T-cell (primary cell): ENCODE measurements at regions of chr9 and their contacts with region 1.

Region 1: GRCh38 chr9:4559261-4560182 is 69.3 kb downstream of the SLC1A1 start:
- DNase-seq: no peak
- ATAC-seq: no peak
- H3K4me3 ChIP-seq: no peak overlapping the region
- H3K4me3 Mint-ChIP-seq: no peak overlapping the region
- H3K27ac ChIP-seq: no peak overlapping the region
- H3K27ac Mint-ChIP-seq: no peak overlapping the region
- H3K4me1 ChIP-seq: peaks cover 11 to 21% of the 10 kb centered on the region in 2 experiments
- H3K4me1 Mint-ChIP-seq: peaks cover 29 to 33% (median 29%) of the 10 kb centered on the region in 3 donors
- H3K27me3 ChIP-seq: no peaks in the 10 kb centered on the region
- H3K27me3 Mint-ChIP-seq: no peaks in the 10 kb centered on the region

Region 2: GRCh38 chr9:4507306-4508130 is 52.0 kb before region 1 on chr9:
- CTCF ChIA-PET with region 1: no interaction called
- POLR2A ChIA-PET with region 1: interaction called in 1 of 2 experiments, 14 read pairs
- DNase-seq: no peak
- ATAC-seq: no peak
- H3K4me3 ChIP-seq: no peak overlapping the region
- H3K4me3 Mint-ChIP-seq: no peak overlapping the region
- H3K27ac ChIP-seq: no peak overlapping the region
- H3K27ac Mint-ChIP-seq: no peak overlapping the region
- H3K4me1 ChIP-seq: no peaks in the 10 kb centered on the region
- H3K4me1 Mint-ChIP-seq: no peaks in the 10 kb centered on the region
- H3K27me3 ChIP-seq: peaks cover 0 to 3% of the 10 kb centered on the region in 2 experiments
- H3K27me3 Mint-ChIP-seq: no peaks in the 10 kb centered on the region

Region 3: GRCh38 chr9:4548811-4549725 is 10.5 kb before region 1 on chr9:
- CTCF ChIA-PET with region 1: interaction called in 1 of 2 experiments, 20 read pairs
- POLR2A ChIA-PET with region 1: no interaction called
- DNase-seq: no peak
- ATAC-seq: no peak
- H3K4me3 ChIP-seq: no peak overlapping the region
- H3K4me3 Mint-ChIP-seq: no peak overlapping the region
- H3K27ac ChIP-seq: no peak overlapping the region
- H3K27ac Mint-ChIP-seq: no peak overlapping the region
- H3K4me1 ChIP-seq: peaks cover 13 to 14% of the 10 kb centered on the region in 2 experiments
- H3K4me1 Mint-ChIP-seq: peaks cover 50 to 61% (median 58%) of the 10 kb centered on the region in 3 donors
- H3K27me3 ChIP-seq: no peaks in the 10 kb centered on the region
- H3K27me3 Mint-ChIP-seq: no peaks in the 10 kb centered on the region